Endothelial cell of umbilical vein (primary cell): ENCODE measurements at regions of chr1 and their contacts with region 1.

Region 1: DNA sequence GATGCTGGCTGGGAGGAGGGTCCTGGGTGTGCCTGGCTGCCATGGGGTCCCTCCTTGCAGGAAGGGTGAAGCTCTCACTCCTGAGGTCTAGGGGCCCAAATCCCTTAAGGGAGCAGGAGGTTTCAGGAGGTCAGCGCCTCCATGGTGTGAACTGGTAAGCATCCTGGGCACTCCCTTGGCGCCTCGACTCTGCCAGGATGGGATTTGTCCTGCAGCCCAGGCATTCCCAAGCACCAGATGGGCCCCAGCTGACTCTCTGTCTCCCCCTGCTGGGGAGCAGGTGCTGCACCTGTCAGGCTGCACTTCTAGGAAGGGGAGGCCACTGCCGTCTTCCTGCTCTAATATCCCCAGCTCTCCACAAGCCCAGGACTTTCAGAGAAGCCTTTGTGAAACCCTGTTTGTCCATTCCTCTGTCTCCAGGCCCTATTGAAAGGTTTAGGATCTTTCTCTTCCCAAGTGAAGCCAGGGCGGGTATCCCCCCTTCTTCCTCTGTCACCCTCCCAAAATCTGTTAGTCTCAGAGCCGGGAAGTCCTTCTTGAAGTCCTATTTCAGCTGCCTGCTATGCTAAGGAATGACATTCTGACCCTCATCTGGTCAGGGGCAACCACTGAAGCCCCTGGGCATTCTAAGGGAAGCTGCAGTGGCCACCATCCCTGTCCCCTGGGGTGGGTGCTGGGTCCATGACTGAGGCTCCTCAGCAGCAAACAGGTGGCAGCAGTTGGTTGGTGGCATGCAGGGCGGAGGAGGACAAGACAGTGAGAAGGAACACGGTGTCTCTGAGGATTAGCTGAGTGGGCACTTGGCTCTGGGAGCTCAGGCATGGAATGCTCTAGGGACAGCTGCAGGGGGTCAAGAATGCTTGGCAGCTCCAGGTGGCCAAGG is 3.3 kb downstream of the MYBPH start:
- DNase-seq: peak; percentile 51
- H3K4me3 ChIP-seq: no peak overlapping the region
- H3K27ac ChIP-seq: no peak overlapping the region
- H3K4me1 ChIP-seq: no peaks in the 10 kb centered on the region
- H3K27me3 ChIP-seq: no peaks in the 10 kb centered on the region
- CTCF ChIP-seq: peak; percentile 84 to 96
- POLR2A ChIP-seq: no peak

Region 2: GRCh38 chr1:203112301-203112874 is 60.0 kb before region 1 on chr1:
- CTCF ChIA-PET with region 1: interaction called, 317 read pairs
- POLR2A ChIA-PET with region 1: interaction called, 3 read pairs
- dilution Hi-C with region 1: no loop called
- intact Hi-C with region 1: no loop called
- DNase-seq: no peak
- H3K4me3 ChIP-seq: no peak overlapping the region
- H3K27ac ChIP-seq: no peak overlapping the region
- H3K4me1 ChIP-seq: no peaks in the 10 kb centered on the region
- H3K27me3 ChIP-seq: peaks cover 35 to 36% of the 10 kb centered on the region in 2 experiments
- CTCF ChIP-seq: no peak
- POLR2A ChIP-seq: no peak

Region 3: GRCh38 chr1:203127666-203128430 is 44.5 kb before region 1 on chr1 and contains the start of gene ADORA1:
- CTCF ChIA-PET with region 1: interaction called, 317 read pairs
- POLR2A ChIA-PET with region 1: no interaction called
- dilution Hi-C with region 1: no loop called
- intact Hi-C with region 1: no loop called
- DNase-seq: no peak
- H3K4me3 ChIP-seq: no peak within 1 kb of the TSS
- H3K27ac ChIP-seq: no peak within 1 kb of the TSS
- H3K4me1 ChIP-seq: peaks cover 4% of the 10 kb centered on the region
- H3K27me3 ChIP-seq: peaks cover 25 to 54% of the 10 kb centered on the region in 2 experiments
- CTCF ChIP-seq: no peak
- POLR2A ChIP-seq: no peak
- total RNA-seq, gene ADORA1: not detected in 2 replicates

Region 4: DNA sequence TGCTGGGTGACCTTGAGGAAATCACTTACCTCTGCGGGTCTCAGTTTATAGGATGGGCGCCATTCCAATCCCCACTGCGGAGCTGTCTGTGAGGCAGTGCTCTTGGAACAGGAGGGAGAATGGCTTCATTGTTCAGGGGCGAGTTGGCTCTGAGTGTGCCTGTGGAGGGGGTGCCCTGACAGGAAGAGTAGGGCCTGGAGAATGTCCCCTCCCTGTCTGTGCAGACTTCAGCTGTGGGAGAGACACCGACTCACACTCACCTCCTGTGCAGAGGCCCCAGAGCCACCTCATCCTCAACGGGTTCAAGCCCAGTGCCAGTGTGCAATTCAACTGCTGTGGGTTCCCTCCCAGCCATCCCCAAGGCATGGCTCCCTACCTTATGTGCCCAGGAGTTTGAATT is 27.7 kb before region 1 on chr1:
- CTCF ChIA-PET with region 1: interaction called, 16 read pairs
- POLR2A ChIA-PET with region 1: no interaction called
- dilution Hi-C with region 1: no loop called
- intact Hi-C with region 1: no loop called
- DNase-seq: no peak
- H3K4me3 ChIP-seq: no peak overlapping the region
- H3K27ac ChIP-seq: no peak overlapping the region
- H3K4me1 ChIP-seq: no peaks in the 10 kb centered on the region
- H3K27me3 ChIP-seq: peaks cover 2 to 20% of the 10 kb centered on the region in 2 experiments
- CTCF ChIP-seq: no peak
- POLR2A ChIP-seq: no peak

Region 5: GRCh38 chr1:203158960-203159665 is 13.3 kb before region 1 on chr1:
- CTCF ChIA-PET with region 1: interaction called, 34 read pairs
- POLR2A ChIA-PET with region 1: interaction called, 4 read pairs
- dilution Hi-C with region 1: no loop called
- intact Hi-C with region 1: no loop called
- DNase-seq: no peak
- H3K4me3 ChIP-seq: no peak overlapping the region
- H3K27ac ChIP-seq: no peak overlapping the region
- H3K4me1 ChIP-seq: peaks cover 6% of the 10 kb centered on the region
- H3K27me3 ChIP-seq: peaks cover 8 to 25% of the 10 kb centered on the region in 2 experiments
- CTCF ChIP-seq: no peak
- POLR2A ChIP-seq: no peak